Activated CD8-positive, alpha-beta T cell treated with anti-CD3 and anti-CD28 coated beads, Interleukin-2, amount 10 ng/mL, durations not matched to agents 7 days and 5 days (primary cell): ENCODE measurements at regions of chr15 and their contacts with region 1.

Region 1: GRCh38 chr15:75042730-75043508 is 19.5 kb downstream of the PPCDC start:
- DNase-seq: peak; percentile 91
- ATAC-seq: peak; percentile 91
- H3K4me3 Mint-ChIP-seq: peak overlapping the region; percentile 55
- H3K27ac Mint-ChIP-seq: peak overlapping the region; percentile 78
- H3K4me1 Mint-ChIP-seq: peaks cover 90% of the 10 kb centered on the region
- H3K27me3 Mint-ChIP-seq: no peaks in the 10 kb centered on the region

Region 2: DNA sequence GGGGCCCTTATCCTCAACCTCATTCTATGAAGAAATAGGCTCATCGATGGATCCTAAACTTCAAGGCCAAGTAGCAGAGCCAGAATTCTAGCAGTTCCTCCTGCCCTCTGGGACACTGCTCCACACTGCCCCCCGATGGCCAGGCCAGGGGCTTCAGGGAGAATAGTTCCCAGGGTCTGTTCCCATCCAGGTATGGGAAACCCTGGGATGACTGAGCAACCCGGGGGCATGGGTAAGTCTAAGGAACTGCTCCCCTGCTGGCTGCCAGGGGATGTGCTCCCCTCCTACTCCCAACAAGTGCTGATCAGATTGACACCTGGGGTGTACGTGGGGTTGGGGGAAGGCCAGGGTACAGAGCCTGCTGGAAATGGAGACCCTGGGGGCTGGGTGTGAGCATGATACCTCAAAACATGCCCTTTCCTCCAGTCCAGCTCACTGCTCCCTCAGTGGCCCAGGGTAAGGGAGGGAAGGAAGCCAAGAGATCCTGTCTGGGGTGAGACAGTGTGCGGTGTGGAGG is 207.6 kb before region 1 on chr15:
- CTCF ChIA-PET with region 1: no interaction called
- POLR2A ChIA-PET with region 1: no interaction called
- DNase-seq: peak; percentile 54
- ATAC-seq: peak; percentile 45
- H3K4me3 Mint-ChIP-seq: no peak overlapping the region
- H3K27ac Mint-ChIP-seq: no peak overlapping the region
- H3K4me1 Mint-ChIP-seq: no peaks in the 10 kb centered on the region
- H3K27me3 Mint-ChIP-seq: peaks cover 3% of the 10 kb centered on the region

Region 3: DNA sequence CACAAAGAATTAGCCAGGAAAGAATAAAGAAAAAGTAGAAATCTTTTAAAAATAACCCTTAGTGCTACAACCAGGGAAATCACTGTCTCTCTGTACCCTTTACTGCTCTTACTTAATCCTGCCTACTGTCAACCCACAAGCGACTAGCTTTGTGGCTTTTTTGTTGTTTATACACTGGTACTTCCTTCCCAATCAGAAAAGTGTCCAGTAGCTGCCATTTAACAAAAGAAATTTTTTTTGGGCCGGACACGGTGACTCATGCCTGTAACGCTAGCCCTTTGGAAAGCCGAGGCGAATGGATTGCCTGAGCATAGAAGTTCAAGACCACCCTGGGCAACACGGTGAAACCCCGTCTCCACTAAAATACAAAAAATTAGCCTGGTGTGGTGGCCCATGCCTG is 122.5 kb before region 1 on chr15:
- CTCF ChIA-PET with region 1: no interaction called
- POLR2A ChIA-PET with region 1: no interaction called
- DNase-seq: no peak
- ATAC-seq: no peak
- H3K4me3 Mint-ChIP-seq: no peak overlapping the region
- H3K27ac Mint-ChIP-seq: no peak overlapping the region
- H3K4me1 Mint-ChIP-seq: peaks cover 12% of the 10 kb centered on the region
- H3K27me3 Mint-ChIP-seq: no peaks in the 10 kb centered on the region

Region 4: DNA sequence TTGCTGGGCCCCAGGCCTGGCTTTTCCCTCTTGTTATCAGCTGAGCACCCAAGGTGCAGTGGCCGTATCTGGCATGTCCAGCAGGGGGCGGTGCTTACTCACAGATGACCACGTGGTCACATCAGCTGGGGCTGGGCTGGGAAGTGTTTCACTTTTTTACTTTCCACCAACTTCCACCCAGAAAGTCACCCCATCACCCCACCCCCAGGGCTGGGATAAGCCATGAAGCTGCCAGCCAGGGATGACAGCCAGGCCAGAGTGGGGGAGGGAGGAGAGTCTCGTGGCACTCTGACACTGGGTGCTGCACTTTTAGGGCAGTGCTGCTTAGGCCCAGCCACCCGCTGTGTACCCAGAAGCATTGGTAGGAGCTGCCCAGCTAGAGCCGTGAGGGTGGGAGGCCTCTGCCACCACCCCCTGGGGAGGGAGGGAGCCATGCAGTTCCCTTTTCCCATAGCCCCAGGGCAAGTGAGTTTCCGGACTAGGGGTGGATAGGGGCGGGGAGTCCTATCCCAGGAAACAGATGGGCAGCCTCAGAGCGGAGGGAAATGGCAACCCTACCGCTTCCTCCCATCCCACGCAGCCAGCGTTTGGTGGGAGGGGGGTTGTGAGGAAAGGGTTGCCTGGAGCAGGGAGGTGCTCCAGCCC is 13.4 kb before region 1 on chr15:
- CTCF ChIA-PET with region 1: interaction called, 30 read pairs
- POLR2A ChIA-PET with region 1: interaction called, 4 read pairs
- DNase-seq: peak; percentile 91
- ATAC-seq: peak; percentile 85
- H3K4me3 Mint-ChIP-seq: no peak overlapping the region
- H3K27ac Mint-ChIP-seq: peak overlapping the region; percentile 75
- H3K4me1 Mint-ChIP-seq: peaks cover 48% of the 10 kb centered on the region
- H3K27me3 Mint-ChIP-seq: no peaks in the 10 kb centered on the region

Region 5: GRCh38 chr15:75061272-75061671 is 18.4 kb after region 1 on chr15:
- CTCF ChIA-PET with region 1: interaction called, 13 read pairs
- POLR2A ChIA-PET with region 1: interaction called, 9 read pairs
- DNase-seq: peak; percentile 43
- ATAC-seq: peak; percentile 53
- H3K4me3 Mint-ChIP-seq: no peak overlapping the region
- H3K27ac Mint-ChIP-seq: peak overlapping the region; percentile 40
- H3K4me1 Mint-ChIP-seq: peaks cover 52% of the 10 kb centered on the region
- H3K27me3 Mint-ChIP-seq: peaks cover 2% of the 10 kb centered on the region

Region 6: DNA sequence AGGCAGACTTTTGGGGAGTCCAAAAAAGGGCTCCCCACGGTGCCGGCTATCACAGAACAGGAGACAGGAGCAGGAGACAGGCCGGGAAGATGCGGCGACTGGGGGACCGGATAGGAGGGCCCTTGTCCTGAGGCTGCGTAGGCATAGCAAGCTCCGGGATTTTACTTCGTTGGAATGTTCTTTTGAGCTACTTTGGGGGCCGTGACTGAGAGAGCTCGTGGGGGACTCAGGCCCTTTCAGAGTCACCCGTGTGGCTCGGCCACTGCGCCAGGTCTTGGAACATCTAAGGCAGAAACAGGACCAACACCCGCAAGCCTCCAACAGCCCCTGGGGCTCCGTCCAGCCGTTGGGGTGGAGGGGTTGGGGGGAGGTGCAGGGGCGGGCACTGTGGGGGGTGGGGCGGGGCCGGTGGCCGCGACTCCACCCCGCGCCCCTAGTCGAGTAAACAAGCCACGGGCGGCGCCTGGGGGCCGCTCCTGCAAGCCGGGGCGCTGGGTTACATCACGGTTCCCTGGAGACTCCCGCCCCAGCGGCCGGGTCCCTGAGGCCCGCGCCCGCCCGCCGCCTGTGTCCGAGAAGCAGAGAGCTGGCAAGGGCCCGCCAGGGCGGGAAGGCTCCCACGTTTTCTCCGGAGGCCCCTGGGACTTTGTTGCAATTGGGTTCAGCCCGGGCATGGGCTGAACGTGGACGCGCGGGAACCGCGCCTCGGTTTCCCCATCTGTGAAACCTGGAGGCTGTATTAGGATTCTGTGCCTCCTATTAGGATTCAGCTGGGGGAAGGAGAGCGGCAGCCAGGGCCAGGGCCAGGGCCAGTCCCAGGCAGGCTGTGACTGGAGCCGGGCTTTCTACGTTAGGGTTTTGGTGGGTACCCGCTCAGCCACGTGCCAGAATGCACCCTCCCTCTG is 135.5 kb after region 1 on chr15:
- CTCF ChIA-PET with region 1: interaction called, 18 read pairs
- POLR2A ChIA-PET with region 1: no interaction called
- DNase-seq: no peak
- ATAC-seq: peak; percentile 48
- H3K4me3 Mint-ChIP-seq: no peak overlapping the region
- H3K27ac Mint-ChIP-seq: no peak overlapping the region
- H3K4me1 Mint-ChIP-seq: peaks cover 30% of the 10 kb centered on the region
- H3K27me3 Mint-ChIP-seq: peaks cover 40% of the 10 kb centered on the region

Region 7: GRCh38 chr15:75201609-75202250 is 158.8 kb after region 1 on chr15 and contains the start of gene C15orf39:
- CTCF ChIA-PET with region 1: interaction called, 45 read pairs
- POLR2A ChIA-PET with region 1: interaction called, 29 read pairs
- DNase-seq: peak; percentile 79
- ATAC-seq: peak; percentile 63
- H3K4me3 Mint-ChIP-seq: peak within 1 kb of the TSS; percentile 90
- H3K27ac Mint-ChIP-seq: peak within 1 kb of the TSS; percentile 91
- H3K4me1 Mint-ChIP-seq: peaks cover 63% of the 10 kb centered on the region
- H3K27me3 Mint-ChIP-seq: no peaks in the 10 kb centered on the region
- total RNA-seq, gene C15orf39: 57.2 to 59.4 TPM